Breast epithelium (tissue), 4 donors: ENCODE measurements at regions of chr2 and their contacts with region 1.

Region 1: GRCh38 chr2:206642075-206643025 is at the start of gene FAM237A:
- DNase-seq: no peak
- H3K4me3 ChIP-seq: no peak within 1 kb of the TSS
- H3K27ac ChIP-seq: no peak within 1 kb of the TSS
- H3K4me1 ChIP-seq: no peaks in the 10 kb centered on the region
- H3K27me3 ChIP-seq: peaks cover 0 to 26% of the 10 kb centered on the region in 2 donors
- CTCF ChIP-seq: no peak
- POLR2A ChIP-seq: no peak
- total RNA-seq, gene FAM237A: not detected

Region 2: GRCh38 chr2:206627632-206628031 is 14.7 kb before region 1 on chr2:
- intact Hi-C with region 1: loop called (anchors 1 kb)
- DNase-seq: no peak
- H3K4me3 ChIP-seq: no peak overlapping the region
- H3K27ac ChIP-seq: no peak overlapping the region
- H3K4me1 ChIP-seq: no peaks in the 10 kb centered on the region
- H3K27me3 ChIP-seq: no peaks in the 10 kb centered on the region
- CTCF ChIP-seq: no peak
- POLR2A ChIP-seq: no peak